Calu3 (cell line): ENCODE measurements at regions of chr16 and their contacts with region 1.

Region 1: GRCh38 chr16:53309457-53309856 is 124.8 kb upstream of the RBL2 start:
- DNase-seq: no peak
- H3K4me3 Mint-ChIP-seq: no peak overlapping the region
- H3K27ac Mint-ChIP-seq: no peak overlapping the region
- H3K4me1 Mint-ChIP-seq: no peaks in the 10 kb centered on the region
- H3K27me3 Mint-ChIP-seq: no peaks in the 10 kb centered on the region
- CTCF ChIP-seq: no peak

Region 2: GRCh38 chr16:52611817-52612673 is 697.4 kb before region 1 on chr16:
- CTCF ChIA-PET with region 1: no interaction called
- intact Hi-C with region 1: no loop called
- DNase-seq: peak; percentile 71
- H3K4me3 Mint-ChIP-seq: peak overlapping the region; percentile 54
- H3K27ac Mint-ChIP-seq: peak overlapping the region; percentile 30
- H3K4me1 Mint-ChIP-seq: peaks cover 42% of the 10 kb centered on the region
- H3K27me3 Mint-ChIP-seq: no peaks in the 10 kb centered on the region
- CTCF ChIP-seq: no peak

Region 3: GRCh38 chr16:53291757-53292392 is 17.6 kb before region 1 on chr16:
- CTCF ChIA-PET with region 1: no interaction called
- intact Hi-C with region 1: loop called (anchors 1 kb)
- DNase-seq: no peak
- H3K4me3 Mint-ChIP-seq: no peak overlapping the region
- H3K27ac Mint-ChIP-seq: no peak overlapping the region
- H3K4me1 Mint-ChIP-seq: no peaks in the 10 kb centered on the region
- H3K27me3 Mint-ChIP-seq: no peaks in the 10 kb centered on the region
- CTCF ChIP-seq: no peak

Region 4: DNA sequence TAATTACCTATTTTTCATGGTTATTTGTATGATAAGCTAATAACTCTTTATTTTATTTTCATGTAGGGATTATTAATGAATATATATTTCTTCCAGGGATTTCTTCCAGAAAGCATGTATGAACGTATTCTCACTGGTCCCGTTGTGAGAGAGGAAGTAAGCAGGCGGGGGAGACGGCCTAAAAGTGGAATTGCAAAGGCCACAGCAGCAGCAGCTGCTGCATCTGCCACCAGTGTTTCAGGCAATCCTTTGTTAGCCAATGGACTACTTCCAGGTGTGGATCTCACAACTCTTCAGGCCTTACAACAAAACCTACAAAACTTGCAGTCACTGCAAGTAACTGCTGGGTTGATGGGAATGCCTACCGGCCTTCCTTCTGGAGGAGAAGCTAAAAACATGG is 14.5 kb after region 1 on chr16:
- CTCF ChIA-PET with region 1: interaction called, 11 read pairs
- intact Hi-C with region 1: no loop called
- DNase-seq: no peak
- H3K4me3 Mint-ChIP-seq: no peak overlapping the region
- H3K27ac Mint-ChIP-seq: no peak overlapping the region
- H3K4me1 Mint-ChIP-seq: no peaks in the 10 kb centered on the region
- H3K27me3 Mint-ChIP-seq: no peaks in the 10 kb centered on the region
- CTCF ChIP-seq: no peak

Region 5: GRCh38 chr16:53404959-53405358 is 95.5 kb after region 1 on chr16:
- CTCF ChIA-PET with region 1: no interaction called
- intact Hi-C with region 1: no loop called
- DNase-seq: no peak
- H3K4me3 Mint-ChIP-seq: no peak overlapping the region
- H3K27ac Mint-ChIP-seq: no peak overlapping the region
- H3K4me1 Mint-ChIP-seq: no peaks in the 10 kb centered on the region
- H3K27me3 Mint-ChIP-seq: no peaks in the 10 kb centered on the region
- CTCF ChIP-seq: no peak